ENCODE measurements at regions of chr1 and their contacts with region 1.

Region 1: GRCh38 chr1:40630488-40631381 is 34.7 kb downstream of the RIMS3 start:
- DNase-seq: peak; percentile 81
- ATAC-seq: peak; percentile 97
- H3K4me3 Mint-ChIP-seq: no peak overlapping the region
- H3K27ac Mint-ChIP-seq: no peak overlapping the region
- H3K4me1 Mint-ChIP-seq: no peaks in the 10 kb centered on the region
- H3K27me3 Mint-ChIP-seq: no peaks in the 10 kb centered on the region
- CTCF ChIP-seq: peak; percentile 66

Region 2: DNA sequence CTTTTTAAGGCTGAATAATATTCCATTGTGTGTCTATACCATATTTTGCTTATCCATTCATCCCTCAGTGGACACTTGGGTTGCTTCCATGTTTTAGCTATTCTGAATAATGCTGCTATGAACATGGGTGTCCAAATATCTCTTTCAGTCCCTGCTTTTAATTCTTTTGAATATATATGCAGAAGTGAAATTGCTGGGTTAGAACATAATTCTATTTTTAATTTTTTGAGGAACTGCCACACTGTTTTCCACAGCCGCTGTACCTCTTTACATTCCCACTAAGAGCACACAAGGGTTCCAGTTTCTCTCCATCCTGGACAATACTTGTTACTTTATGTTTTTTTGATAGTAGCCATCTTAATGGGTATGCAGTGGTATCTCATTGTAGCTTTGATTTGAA is 30.8 kb before region 1 on chr1:
- CTCF ChIA-PET with region 1: no interaction called
- POLR2A ChIA-PET with region 1: no interaction called
- DNase-seq: no peak
- ATAC-seq: no peak
- H3K4me3 Mint-ChIP-seq: no peak overlapping the region
- H3K27ac Mint-ChIP-seq: no peak overlapping the region
- H3K4me1 Mint-ChIP-seq: peaks cover 4% of the 10 kb centered on the region; the same call in 1 of the 2 replicates
- H3K27me3 Mint-ChIP-seq: no peaks in the 10 kb centered on the region; the same call in 1 of the 2 replicates
- CTCF ChIP-seq: no peak

Region 3: DNA sequence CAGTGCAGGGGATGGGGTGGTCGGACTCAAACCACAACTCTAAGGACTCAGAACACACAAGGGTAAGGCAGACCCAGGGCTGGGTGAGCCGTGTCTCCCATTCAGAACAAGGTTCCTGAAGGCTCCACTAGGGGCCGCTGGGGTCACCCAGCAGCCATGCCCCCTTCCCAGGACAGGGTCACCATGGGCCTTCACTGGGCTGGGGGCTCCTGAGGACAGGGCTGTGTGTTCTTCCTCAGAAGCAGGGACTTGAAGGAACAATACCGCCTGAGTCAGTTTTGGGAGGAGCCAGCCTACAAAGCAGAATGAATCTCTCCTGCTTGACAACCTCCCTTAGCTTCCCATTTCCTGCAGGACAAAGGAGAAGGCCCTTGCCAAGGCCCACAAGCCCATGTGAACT is 19.3 kb after region 1 on chr1:
- CTCF ChIA-PET with region 1: interaction called, 12 read pairs
- POLR2A ChIA-PET with region 1: no interaction called
- DNase-seq: peak; percentile 76
- ATAC-seq: peak; percentile 87
- H3K4me3 Mint-ChIP-seq: no peak overlapping the region
- H3K27ac Mint-ChIP-seq: no peak overlapping the region
- H3K4me1 Mint-ChIP-seq: peaks cover 14% of the 10 kb centered on the region
- H3K27me3 Mint-ChIP-seq: no peaks in the 10 kb centered on the region
- CTCF ChIP-seq: peak; percentile 50

Region 4: DNA sequence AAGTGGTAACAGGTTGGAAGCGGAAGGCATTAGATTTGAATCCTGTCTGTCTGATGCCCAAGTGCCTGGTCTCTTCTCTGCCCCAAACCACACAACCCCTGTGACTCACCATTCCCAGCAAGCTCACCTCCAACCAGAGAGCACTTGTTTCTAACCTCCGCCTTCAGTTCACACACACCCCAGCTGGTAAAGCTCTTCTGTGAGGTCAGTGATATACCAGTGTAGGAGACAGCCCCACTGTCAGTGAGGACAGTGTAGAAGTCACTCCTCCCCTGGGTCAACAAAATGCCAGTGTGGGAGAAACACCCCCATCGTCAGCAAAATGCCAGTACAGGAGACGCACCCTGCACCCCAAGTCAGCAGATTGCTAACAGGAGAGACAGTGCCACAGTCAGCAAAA is 32.1 kb after region 1 on chr1:
- CTCF ChIA-PET with region 1: interaction called, 33 read pairs
- POLR2A ChIA-PET with region 1: no interaction called
- DNase-seq: no peak
- ATAC-seq: no peak
- H3K4me3 Mint-ChIP-seq: no peak overlapping the region
- H3K27ac Mint-ChIP-seq: no peak overlapping the region; the same call in 1 of the 2 replicates
- H3K4me1 Mint-ChIP-seq: peaks cover 33% of the 10 kb centered on the region
- H3K27me3 Mint-ChIP-seq: no peaks in the 10 kb centered on the region; the same call in 1 of the 2 replicates
- CTCF ChIP-seq: no peak

Region 5: GRCh38 chr1:40861224-40862003 is 230.7 kb after region 1 on chr1:
- CTCF ChIA-PET with region 1: no interaction called
- POLR2A ChIA-PET with region 1: no interaction called
- DNase-seq: peak; percentile 45
- ATAC-seq: no peak; the same call in 1 of the 2 replicates
- H3K4me3 Mint-ChIP-seq: peak overlapping the region; percentile 71
- H3K27ac Mint-ChIP-seq: no peak overlapping the region
- H3K4me1 Mint-ChIP-seq: peaks cover 18% of the 10 kb centered on the region
- H3K27me3 Mint-ChIP-seq: peaks cover 32% of the 10 kb centered on the region
- CTCF ChIP-seq: no peak